Activated CD4-positive, alpha-beta memory T cell treated with anti-CD3 and anti-CD28 coated beads for 36 hours (primary cell): ENCODE measurements at regions of chr20 and their contacts with region 1.

Region 1: DNA sequence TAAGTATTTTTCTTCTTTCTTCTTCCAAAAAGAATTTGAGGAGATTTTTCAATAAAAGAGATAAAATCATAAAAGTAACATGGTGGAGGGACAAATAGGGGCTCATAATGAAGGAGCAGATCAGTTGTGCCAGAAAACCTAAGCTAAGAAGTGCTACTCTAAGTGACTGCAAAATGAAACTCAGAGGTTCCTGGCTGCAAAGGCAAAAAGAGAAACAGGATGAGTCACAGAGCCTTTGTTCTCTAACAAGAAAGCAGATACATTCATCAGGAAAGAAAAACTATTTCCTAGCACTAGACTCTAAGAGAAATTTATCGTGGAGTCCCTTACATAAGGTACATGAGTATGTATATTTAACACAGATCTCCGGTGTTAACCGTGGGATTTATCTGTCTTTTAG is 49.8 kb downstream of the TSHZ2 start:
- DNase-seq: peak; percentile 32
- H3K4me3 Mint-ChIP-seq: peak overlapping the region; percentile 12
- H3K27ac Mint-ChIP-seq: peak overlapping the region; percentile 92
- H3K4me1 Mint-ChIP-seq: peaks cover 79% of the 10 kb centered on the region
- H3K27me3 Mint-ChIP-seq: peaks cover under 1% of the 10 kb centered on the region

Region 2: DNA sequence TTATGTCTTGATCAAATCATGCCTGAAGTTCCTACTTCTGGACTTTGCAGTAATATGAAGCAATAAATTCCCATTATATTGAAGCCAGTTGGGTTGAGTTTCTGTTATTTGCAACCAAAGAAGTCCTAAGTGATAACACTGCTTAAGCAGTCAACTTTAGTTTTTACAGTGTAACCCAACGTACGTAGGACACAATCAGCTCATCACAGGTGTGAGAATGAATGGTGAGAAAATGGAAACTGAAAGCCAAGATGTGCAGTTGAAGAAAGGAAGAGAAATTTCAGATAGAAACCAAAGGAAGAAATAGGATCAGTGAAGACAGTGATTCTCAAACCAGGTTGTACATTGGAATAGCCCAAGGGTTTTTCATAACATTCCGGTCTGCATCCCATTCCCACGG is 619.0 kb before region 1 on chr20:
- CTCF ChIA-PET with region 1: no interaction called
- POLR2A ChIA-PET with region 1: no interaction called
- intact Hi-C with region 1: loop called (anchors 5 kb)
- DNase-seq: no peak
- H3K4me3 Mint-ChIP-seq: no peak overlapping the region
- H3K27ac Mint-ChIP-seq: no peak overlapping the region
- H3K4me1 Mint-ChIP-seq: peaks cover 63% of the 10 kb centered on the region
- H3K27me3 Mint-ChIP-seq: no peaks in the 10 kb centered on the region

Region 3: DNA sequence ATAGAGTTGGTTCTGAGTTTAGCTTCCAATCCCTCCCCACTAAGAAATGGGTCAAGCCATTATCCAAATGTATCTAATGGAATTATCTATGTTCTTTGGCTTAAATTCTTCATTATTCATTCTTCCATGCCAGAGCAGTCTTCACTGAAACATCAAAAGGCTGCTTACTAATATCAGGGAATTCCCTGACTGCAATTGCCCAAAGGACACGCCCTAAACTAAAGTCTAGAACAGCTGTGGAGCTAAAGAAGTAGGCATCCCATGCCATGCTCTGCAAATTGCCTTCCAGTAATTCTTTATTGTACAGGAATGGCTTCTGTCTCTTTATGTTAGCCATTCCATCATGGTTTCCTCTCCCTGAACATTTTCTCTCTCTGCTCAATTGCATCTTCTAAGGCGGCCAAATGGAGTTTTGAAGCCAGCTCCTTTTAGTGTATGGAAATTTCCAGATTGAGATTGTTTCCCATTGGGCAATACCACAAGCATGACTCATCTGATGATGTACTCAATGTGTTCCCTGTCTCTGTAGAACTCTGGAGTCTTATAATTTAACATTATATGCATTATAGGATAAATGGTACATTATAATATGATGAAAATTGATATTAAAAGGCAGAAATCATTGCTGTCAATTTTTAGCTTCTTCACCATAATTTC is 78.6 kb before region 1 on chr20:
- CTCF ChIA-PET with region 1: no interaction called
- POLR2A ChIA-PET with region 1: no interaction called
- intact Hi-C with region 1: no loop called
- DNase-seq: no peak
- H3K4me3 Mint-ChIP-seq: no peak overlapping the region
- H3K27ac Mint-ChIP-seq: no peak overlapping the region
- H3K4me1 Mint-ChIP-seq: peaks cover 2% of the 10 kb centered on the region
- H3K27me3 Mint-ChIP-seq: peaks cover 4% of the 10 kb centered on the region

Region 4: DNA sequence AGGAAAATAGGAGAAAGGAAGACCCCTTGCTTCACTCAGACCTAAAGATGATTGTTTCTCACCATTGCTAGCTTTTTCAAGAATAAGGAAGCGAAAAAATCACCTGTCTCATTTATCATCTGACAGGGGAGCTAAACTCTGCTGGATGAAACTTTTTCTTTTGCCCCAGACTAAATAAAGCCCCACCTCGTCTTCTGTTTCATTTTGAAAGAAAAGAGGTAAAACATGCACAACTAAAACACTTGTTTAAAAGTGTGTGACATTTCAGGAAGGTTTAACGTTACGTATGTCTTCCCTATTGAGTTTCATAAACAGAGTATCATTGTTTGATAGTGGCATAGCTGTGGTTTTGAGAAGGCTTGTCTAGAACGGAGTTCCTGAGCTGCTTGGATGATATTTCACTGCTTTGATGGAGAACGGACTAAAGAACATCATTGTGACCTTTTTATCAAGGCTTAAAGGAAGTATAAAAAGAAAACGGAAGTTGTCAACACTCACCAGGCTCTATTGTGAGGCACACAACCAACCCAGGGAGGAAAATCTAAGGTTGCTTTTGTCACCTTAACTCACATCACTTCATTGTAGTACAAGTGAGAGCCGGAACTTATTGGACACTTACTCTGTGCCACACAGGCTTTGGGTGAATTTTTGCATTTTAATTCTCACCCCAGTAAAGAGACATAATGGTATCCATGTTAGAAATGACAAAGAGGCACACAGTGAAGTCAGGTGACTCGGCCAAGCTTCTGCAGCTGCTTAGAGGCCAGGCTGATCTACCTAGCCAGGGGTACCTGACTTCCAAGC is 20.2 kb before region 1 on chr20:
- CTCF ChIA-PET with region 1: interaction called, 3 read pairs
- POLR2A ChIA-PET with region 1: interaction called, 6 read pairs
- intact Hi-C with region 1: loop called (anchors 1 kb)
- DNase-seq: peak; percentile 48
- H3K4me3 Mint-ChIP-seq: peak overlapping the region; percentile 70
- H3K27ac Mint-ChIP-seq: peak overlapping the region; percentile 96
- H3K4me1 Mint-ChIP-seq: peaks cover 72% of the 10 kb centered on the region
- H3K27me3 Mint-ChIP-seq: no peaks in the 10 kb centered on the region

Region 5: GRCh38 chr20:53070706-53071392 is 48.9 kb after region 1 on chr20:
- CTCF ChIA-PET with region 1: no interaction called
- POLR2A ChIA-PET with region 1: interaction called, 3 read pairs
- intact Hi-C with region 1: loop called (anchors 1 kb)
- DNase-seq: peak; percentile 47
- H3K4me3 Mint-ChIP-seq: peak overlapping the region; percentile 18
- H3K27ac Mint-ChIP-seq: peak overlapping the region; percentile 93
- H3K4me1 Mint-ChIP-seq: peaks cover 56% of the 10 kb centered on the region
- H3K27me3 Mint-ChIP-seq: no peaks in the 10 kb centered on the region

Region 6: DNA sequence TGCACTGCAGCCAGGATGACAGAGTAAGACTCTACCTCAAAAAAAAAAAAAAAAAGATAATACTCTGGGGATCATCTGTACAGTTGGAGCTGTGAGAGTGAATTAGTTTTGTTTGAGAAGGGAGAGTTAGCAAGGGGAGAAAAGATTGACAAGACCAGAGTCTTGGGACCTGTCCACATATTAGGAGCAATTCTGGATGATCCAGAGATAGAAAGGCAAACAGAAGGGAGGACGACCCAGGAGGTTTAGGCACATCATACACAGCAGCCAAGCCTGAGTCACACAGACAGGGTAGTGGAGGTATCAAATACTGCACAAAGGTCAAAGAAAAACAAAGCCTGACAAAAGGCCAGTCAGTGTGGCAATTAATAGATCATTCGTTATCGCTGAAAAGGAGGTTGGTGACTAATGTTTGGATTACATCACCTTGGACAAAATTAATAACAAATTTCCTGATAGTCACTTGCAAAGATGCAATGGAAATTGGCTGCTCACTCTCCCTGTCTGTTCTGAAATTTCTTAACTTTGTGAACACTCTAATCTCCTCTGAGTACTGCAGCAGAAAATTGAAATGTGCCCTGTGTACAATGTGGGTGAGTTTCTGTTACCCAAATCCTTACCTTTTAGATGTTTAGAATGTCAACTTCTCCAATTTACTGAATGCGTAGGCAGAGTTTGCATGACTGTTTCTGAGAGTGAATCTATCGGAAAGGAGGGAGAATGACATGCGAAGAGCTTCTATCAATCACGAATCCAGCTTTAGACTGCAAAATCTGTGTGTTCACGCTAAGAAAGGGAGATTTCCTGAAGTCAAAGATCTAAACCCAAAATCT is 55.7 kb after region 1 on chr20:
- CTCF ChIA-PET with region 1: no interaction called
- POLR2A ChIA-PET with region 1: interaction called, 5 read pairs
- intact Hi-C with region 1: loop called (anchors 1 kb)
- DNase-seq: peak; percentile 51
- H3K4me3 Mint-ChIP-seq: no peak overlapping the region
- H3K27ac Mint-ChIP-seq: no peak overlapping the region
- H3K4me1 Mint-ChIP-seq: peaks cover 47% of the 10 kb centered on the region
- H3K27me3 Mint-ChIP-seq: no peaks in the 10 kb centered on the region

Region 7: DNA sequence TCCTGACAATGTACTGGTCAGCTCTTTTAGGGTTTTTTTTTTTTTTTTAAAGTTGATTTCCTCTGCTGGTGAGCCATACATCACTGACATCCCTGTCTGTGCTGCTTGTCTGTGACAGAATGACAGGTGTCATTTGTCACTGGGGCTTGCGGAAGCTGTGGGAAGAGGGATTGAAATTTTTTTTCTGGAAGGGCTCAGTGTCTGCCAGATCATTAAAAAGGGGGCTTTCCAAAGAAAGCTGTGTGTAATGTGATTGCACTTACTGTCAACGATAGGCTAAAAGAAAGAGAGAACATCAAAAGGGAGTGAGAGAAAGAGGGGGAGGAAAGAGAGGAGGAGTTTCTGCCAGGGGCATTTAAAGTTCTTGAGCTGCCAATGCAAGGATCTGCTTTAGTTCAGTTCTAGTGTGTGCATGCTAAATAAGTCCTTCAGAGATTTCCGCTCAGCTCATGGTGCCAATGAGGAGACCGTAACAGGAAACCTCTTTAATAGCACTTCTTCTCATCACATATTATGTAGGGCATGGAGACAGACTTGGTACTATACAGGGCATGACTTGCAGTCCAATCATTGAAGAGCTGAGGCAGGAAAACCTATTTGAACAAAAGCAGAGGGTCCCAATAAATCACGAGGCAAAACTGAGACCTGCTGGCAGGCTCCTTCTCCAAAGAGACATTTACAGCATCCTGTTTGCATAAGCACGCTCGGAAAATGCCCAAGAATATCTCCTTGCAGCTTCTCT is 127.4 kb after region 1 on chr20:
- CTCF ChIA-PET with region 1: interaction called, 3 read pairs
- POLR2A ChIA-PET with region 1: interaction called, 3 read pairs
- intact Hi-C with region 1: loop called (anchors 2 kb)
- DNase-seq: no peak
- H3K4me3 Mint-ChIP-seq: no peak overlapping the region
- H3K27ac Mint-ChIP-seq: no peak overlapping the region
- H3K4me1 Mint-ChIP-seq: peaks cover 54% of the 10 kb centered on the region
- H3K27me3 Mint-ChIP-seq: no peaks in the 10 kb centered on the region

Region 8: DNA sequence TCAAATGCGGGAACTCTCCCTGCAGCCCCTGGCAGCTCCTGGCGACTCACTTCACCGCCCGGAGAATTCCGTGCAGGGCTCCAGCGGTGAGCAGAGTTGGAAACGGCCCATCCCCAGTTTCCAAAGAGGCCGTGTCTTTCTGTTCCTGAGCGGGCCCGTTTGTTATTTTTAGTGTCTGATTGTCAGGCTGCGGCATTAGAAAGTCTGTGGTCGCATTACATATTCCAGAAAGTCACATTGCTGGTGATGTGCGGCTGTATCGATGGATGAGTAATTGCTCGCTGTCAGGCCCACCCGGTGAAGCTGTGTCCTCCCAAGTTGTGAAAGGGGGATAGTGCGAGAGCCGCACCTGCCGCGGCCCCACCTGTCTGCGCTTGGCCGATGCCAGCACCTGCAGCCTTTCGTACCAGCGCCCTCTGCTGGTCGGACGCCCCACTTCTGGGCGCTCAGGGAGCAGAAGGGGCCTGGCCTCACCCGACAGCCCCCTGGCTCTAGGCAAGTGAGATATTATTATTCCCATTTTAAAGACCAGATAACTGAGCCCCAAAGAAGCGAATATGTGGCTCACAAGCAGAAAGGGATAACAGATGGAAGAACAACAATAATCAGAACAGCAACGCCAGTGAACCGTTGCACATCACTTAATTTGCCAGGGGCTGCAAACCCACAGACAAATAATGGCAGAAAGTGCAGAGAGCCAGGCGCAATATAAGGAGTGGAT is 195.1 kb after region 1 on chr20:
- CTCF ChIA-PET with region 1: interaction called, 4 read pairs
- POLR2A ChIA-PET with region 1: no interaction called
- intact Hi-C with region 1: loop called (anchors 5 kb)
- DNase-seq: peak; percentile 83
- H3K4me3 Mint-ChIP-seq: no peak overlapping the region
- H3K27ac Mint-ChIP-seq: peak overlapping the region; percentile 72
- H3K4me1 Mint-ChIP-seq: peaks cover 51% of the 10 kb centered on the region
- H3K27me3 Mint-ChIP-seq: no peaks in the 10 kb centered on the region